GM10248 (cell line): ENCODE measurements at regions of chr2 and their contacts with region 1.

Region 1: DNA sequence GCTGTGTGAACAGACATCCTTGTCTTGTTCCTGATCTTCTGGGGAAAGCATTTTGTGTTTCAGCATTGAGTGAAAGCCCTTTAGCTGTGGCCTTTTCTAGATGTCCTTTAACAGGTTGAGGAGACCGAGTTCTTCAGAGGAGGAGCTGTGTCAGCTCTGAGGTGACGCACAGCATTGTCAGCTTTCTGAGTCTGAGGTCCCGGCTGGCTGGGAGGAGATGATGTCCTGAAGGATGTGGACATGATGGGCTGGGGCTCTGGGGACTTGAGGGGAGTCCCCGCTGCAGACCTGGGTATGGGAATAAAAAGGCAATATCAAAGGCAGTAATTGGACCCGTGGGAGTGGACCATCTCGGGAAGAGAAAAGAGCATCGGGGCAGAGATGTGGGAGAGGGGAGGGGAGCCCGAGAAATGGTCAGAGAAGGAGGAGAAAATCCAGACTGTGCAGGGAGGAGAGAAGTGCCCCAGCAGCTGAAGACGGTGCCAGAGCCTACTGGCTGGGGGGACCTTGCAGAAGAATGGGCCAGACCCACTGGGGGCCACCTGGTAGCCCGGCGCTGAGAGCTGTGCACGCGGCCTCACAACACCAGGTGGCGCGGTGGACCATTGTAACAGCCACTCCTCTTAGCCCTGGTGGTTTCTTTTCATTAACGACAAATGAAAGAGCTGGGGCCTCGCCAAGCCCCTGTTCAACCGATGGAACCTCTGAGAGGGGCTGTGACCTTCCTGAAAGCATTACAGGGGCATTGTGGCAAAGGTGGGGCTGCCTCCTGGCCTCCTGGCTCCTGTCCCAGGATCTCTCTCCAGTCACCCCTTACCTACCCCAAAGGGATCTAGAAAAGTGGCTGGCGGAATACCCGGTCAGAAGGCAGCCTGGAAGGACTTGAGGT is 61.6 kb downstream of the ST3GAL5 start:
- DNase-seq: peak; percentile 85
- CTCF ChIP-seq: peak; percentile 94

Region 2: DNA sequence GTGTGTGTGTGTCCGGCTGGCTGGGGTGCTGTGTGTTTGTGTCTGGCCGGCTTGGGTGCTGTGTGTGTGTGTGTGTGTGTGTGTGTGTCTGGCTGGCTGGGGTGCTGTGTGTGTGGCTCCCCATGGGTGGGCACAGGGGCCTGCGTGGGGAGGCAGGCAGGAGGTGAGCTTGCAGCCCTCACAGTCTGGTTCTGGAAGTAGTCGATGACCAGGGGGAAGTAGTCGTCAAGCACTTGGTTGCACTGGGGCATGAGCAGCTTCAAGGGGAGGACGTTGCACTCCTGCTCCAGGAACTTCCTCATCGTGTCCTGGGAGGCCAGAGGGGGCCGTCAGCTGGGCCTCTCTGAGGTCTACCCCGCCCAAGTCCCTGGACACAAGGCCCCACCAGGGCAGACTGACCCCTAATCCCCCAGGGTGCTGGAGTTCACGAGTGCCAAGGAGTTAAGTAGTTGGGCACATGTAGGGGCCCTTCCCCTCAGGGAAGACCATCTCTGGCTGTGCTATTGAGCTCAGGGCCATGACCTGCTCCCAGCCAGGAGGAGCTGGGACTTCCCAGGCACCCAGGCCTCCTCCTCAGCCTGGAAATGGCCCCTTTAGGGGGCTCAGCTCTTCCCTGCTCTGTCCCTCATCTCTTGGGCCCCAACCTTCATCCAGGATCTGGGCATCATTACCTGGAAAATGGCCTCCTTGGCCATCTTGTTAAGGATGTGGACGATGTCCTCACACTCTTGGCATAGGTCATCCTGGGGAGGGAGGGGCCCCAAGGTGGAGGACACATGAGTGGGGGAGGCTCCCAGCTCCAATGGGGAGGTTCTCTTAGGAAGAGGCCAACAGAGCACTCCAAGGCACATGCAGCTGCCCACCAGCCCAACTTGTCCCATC is 160.6 kb before region 1 on chr2:
- CTCF ChIA-PET with region 1: no interaction called
- POLR2A ChIA-PET with region 1: no interaction called
- DNase-seq: no peak
- CTCF ChIP-seq: no peak

Region 3: DNA sequence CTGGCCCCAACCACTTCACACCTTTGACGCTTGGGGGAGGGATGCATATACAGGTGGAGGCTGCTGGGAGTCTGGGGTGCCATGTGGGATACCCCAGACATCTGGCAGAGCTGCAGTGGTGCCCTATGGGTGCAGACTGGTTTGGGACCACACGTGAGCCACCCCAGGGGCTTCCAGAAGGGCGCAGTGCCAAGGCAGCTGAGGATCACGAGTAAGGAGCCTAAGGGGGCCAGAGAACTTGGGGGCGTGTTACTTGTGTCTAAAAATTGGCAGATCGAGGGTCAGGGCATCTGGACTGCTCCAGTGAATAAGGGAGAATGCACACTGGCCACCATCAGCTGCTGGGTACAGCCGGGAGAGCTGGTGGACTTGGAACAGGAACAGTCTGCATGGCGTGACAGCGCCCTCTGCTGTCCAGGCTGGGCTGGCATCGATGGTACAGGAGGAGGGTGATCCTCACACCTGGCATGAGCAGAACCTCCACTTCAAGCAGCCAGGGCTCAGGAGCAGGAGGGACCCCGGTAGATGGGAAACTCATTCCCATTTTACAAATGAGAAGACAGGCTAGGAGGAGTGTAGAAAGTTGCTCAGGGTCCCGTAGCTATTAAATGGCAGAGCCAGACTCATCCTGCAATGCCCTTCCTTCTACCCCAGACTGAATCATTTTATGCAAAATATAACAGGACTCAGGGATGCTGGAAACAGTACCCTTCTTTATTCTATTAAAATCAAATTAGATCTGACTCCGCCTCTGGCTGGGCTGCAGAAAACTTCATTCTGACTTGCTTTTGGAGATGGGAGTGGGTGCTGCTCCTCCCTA is 13.0 kb before region 1 on chr2:
- CTCF ChIA-PET with region 1: interaction called, 29 read pairs
- POLR2A ChIA-PET with region 1: no interaction called
- DNase-seq: peak; percentile 89
- CTCF ChIP-seq: peak; percentile 92

Region 4: DNA sequence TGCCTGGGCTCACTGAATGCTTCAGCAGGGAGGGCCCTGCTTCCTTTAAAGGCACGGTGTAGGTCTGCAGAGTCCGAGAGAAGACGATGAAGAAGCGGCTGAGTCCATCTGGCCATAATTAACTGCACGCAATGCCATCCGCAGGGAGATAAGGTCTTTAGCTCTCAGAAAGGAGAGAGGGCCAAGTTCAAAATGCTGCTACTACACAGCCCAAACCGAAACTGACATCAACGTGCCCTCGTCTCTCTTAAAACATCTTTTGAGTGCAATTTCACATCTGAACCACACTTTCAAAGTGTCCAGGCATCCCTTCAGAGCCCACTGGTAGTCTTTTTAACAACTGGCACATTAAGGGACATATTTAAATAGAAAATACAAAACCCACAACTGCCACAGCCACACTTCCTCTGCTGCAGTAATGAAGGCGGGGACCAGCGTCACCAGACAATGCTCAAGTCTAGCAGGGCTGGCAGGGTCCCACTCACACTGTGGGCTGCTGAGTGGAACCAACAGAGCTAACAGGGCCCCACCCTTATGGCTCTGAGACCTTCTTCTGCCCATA is 25.8 kb after region 1 on chr2:
- CTCF ChIA-PET with region 1: interaction called, 14 read pairs
- POLR2A ChIA-PET with region 1: no interaction called
- DNase-seq: no peak
- CTCF ChIP-seq: no peak

Region 5: GRCh38 chr2:86042256-86043168 is 215.3 kb after region 1 on chr2:
- CTCF ChIA-PET with region 1: interaction called, 26 read pairs
- POLR2A ChIA-PET with region 1: no interaction called
- DNase-seq: no peak
- CTCF ChIP-seq: no peak

Region 6: GRCh38 chr2:86087936-86088850 is 261.0 kb after region 1 on chr2:
- CTCF ChIA-PET with region 1: interaction called, 436 read pairs
- POLR2A ChIA-PET with region 1: no interaction called
- DNase-seq: no peak
- CTCF ChIP-seq: peak; percentile 22